ENCODE measurements at regions of chr9 and their contacts with region 1.

Region 1: DNA sequence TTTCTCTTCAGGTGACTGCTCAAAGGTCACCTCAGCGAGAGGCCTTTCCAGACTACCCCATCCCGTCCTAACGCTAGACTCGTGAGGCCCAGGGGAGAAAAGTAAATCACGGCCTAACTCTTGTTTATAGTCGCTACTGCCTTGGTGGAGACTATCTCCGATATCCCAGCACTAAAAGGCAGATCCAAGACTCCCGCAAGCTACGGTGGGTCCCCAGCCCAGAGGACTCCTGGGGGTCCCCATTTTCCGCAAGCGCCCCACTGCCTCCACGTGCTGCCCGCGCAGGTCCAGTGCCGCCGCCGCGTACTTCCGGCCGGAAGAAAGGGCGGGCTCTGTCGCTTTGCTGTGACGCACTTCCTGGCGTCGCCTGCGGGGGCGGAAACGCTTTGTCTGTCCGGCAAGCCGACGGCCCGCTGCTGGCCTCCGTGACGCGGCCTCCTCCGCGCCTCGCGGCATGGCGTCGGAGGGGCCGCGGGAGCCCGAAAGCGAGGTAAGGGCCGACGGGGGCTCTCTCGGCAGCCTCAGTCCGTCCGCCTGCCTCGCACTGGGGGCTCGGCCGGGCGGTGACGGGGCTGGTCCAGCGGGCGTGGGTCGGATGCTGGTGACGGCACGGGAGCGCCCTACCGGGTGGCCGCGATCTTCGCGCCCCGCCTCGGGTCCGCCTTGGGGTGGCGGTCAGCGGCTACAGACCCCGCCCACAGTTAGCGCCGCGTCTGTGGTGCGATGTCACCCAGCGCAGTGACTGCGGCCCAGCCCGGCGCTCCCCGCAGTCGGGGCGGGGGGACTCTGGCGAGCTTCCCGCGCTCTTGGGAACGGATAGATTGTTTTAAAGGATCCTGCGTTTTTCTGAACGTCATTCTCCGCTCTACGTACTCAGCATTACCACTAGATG is at the start of gene SECISBP2:
- DNase-seq: peak; percentile 96
- ATAC-seq: peak; percentile 89
- H3K4me3 Mint-ChIP-seq: peak within 1 kb of the TSS; percentile 86
- H3K27ac Mint-ChIP-seq: peak within 1 kb of the TSS; percentile 99
- H3K4me1 Mint-ChIP-seq: peaks cover 78% of the 10 kb centered on the region
- H3K27me3 Mint-ChIP-seq: no peaks in the 10 kb centered on the region
- CTCF ChIP-seq: no peak
- total RNA-seq, gene SECISBP2: 40.4 to 42.5 TPM

Region 2: DNA sequence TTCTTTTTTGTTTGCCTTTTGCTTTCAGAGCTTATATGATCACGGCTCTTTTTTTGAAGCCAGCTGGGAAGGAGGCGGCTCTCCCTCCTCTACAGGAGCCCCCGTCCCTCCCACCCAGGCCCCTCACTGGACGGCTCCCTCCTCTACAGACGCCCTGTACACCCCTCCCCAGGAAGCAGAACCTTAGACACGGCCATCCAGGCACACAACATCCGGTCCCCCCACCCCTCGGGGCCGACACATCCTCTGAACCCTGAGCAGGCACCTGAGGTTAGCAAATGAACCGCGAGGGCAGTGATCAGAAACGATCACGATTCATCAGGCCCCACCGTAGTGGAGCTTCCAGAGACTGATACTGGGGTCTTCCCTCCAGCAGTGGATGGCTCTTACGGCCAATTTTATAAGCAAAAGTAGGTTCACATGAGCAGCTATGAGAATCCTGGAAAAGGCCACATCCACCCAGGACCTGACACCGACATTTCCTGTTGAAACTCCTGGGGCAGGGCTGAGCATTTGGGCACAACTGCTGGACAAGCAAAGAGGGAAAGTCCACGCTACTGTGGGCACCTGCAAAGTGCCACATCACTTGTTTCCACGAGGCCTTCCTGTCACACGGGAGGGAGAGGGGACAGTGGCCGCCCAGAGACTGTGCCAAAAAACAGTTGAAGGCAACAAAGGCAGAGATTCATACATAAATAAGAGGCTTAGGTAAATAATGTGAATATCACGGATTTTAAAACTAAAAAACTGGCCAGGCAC is 100.7 kb after region 1 on chr9:
- CTCF ChIA-PET with region 1: no interaction called
- POLR2A ChIA-PET with region 1: no interaction called
- intact Hi-C with region 1: loop called (anchors 5 kb)
- DNase-seq: peak; percentile 92
- ATAC-seq: peak; percentile 52
- H3K4me3 Mint-ChIP-seq: peak overlapping the region; percentile 79
- H3K27ac Mint-ChIP-seq: peak overlapping the region; percentile 98
- H3K4me1 Mint-ChIP-seq: peaks cover 97% of the 10 kb centered on the region
- H3K27me3 Mint-ChIP-seq: no peaks in the 10 kb centered on the region
- CTCF ChIP-seq: no peak

Region 3: DNA sequence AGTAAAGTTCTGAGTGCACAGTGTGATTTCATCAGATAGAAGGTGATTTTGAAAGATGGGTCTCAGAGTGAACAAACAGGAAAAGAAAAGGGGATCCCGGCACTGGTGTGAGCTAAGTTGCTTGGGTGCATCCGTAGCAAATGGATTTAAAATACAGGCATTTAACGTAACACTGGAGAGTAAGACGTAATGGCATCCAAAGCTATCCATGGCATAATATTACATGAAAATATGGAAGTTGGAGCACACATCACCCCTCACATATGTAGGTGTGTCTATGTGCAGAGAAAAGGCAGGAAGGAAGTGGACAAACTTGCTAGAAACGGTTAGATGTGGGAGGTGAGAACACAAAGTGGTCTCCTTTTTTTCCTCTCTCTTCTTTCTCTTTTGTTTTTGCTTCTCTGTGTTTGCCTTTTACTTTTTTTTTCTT is 217.8 kb after region 1 on chr9:
- CTCF ChIA-PET with region 1: no interaction called
- POLR2A ChIA-PET with region 1: interaction called, 3 read pairs
- intact Hi-C with region 1: loop called (anchors 10 kb)
- DNase-seq: peak; percentile 47
- ATAC-seq: peak; percentile 73
- H3K4me3 Mint-ChIP-seq: peak overlapping the region; percentile 47
- H3K27ac Mint-ChIP-seq: peak overlapping the region; percentile 96
- H3K4me1 Mint-ChIP-seq: peaks cover 88% of the 10 kb centered on the region
- H3K27me3 Mint-ChIP-seq: no peaks in the 10 kb centered on the region
- CTCF ChIP-seq: no peak

Region 4: GRCh38 chr9:89606049-89606621 is 287.8 kb after region 1 on chr9:
- CTCF ChIA-PET with region 1: no interaction called
- POLR2A ChIA-PET with region 1: no interaction called
- intact Hi-C with region 1: no loop called
- DNase-seq: peak; percentile 58
- ATAC-seq: peak; percentile 12
- H3K4me3 Mint-ChIP-seq: peak overlapping the region; percentile 84
- H3K27ac Mint-ChIP-seq: peak overlapping the region; percentile 76
- H3K4me1 Mint-ChIP-seq: peaks cover 23% of the 10 kb centered on the region
- H3K27me3 Mint-ChIP-seq: peaks cover 2% of the 10 kb centered on the region
- CTCF ChIP-seq: no peak

Measured in activated CD8-positive, alpha-beta T cell treated with anti-CD3 and anti-CD28 coated beads for 36 hours (primary cell).